GM12878 (cell line): ENCODE measurements at regions of chr5 and their contacts with region 1.

Region 1: DNA sequence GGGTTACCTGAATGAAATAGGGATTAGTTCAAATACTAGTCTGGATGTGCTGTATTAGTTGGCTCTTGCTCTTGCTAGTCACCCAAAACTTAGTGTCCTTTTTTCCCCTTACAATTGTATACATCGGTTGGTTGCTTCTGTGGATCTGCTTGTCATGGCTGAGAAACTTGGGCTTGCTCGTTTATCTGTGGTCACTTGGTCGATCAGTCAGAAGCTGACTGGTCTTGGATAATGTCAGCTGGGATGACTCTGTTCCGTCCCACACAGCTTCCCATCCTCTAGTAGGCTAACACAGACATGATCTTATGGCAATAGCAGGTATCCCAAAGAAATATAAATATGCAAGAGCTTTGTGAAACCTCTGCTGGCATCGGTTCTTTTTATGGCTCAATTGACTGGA is 807.4 kb downstream of the MAT2B start:
- DNase-seq: no peak
- ATAC-seq: no peak
- H3K4me3 ChIP-seq: no peak overlapping the region
- H3K27ac ChIP-seq: no peak overlapping the region
- H3K4me1 ChIP-seq: no peaks in the 10 kb centered on the region
- H3K27me3 ChIP-seq: no peaks in the 10 kb centered on the region
- CTCF ChIP-seq: no peak
- EP300 ChIP-seq: no peak
- POLR2A ChIP-seq: no peak
- RAD21 ChIP-seq: no peak

Region 2: DNA sequence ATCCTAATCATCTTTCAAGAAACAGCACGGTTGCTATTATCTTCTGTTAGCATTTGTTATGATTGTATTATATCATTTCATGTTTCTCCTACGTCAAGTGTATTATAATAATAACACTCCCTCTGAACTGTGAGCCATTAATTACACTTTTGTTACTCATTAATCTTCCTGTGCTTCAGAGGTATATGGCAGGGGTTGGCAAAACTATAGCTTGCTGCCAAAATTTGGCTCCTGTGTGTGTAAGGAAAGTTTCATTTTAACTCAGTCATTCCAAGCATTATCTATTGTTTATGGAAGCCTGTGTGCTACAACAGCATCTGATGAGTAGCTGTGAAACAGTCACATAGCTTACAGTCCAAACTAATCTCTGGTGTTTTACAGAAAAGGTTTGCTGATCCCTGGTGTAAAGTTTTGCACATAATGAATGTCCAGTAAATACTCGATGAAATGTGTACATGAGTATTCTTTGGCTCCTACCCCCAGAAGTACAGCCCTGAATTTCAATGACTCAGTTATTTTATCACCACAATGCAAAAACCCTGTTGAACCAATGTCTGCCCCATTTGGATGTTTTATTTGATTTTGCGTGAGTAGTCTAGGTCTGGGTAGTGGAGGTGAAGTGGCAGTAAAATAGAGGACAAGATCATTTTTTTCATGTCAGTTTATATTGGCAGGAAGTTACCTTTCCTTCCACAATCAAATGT is 159.2 kb before region 1 on chr5:
- CTCF ChIA-PET with region 1: no interaction called
- POLR2A ChIA-PET with region 1: no interaction called
- RAD21 ChIA-PET with region 1: no interaction called
- SMC1A ChIA-PET with region 1: no interaction called
- in situ Hi-C with region 1: no loop called
- intact Hi-C with region 1: no loop called
- DNase-seq: no peak
- ATAC-seq: no peak
- H3K4me3 ChIP-seq: no peak overlapping the region
- H3K27ac ChIP-seq: no peak overlapping the region
- H3K4me1 ChIP-seq: no peaks in the 10 kb centered on the region
- H3K27me3 ChIP-seq: no peaks in the 10 kb centered on the region
- CTCF ChIP-seq: no peak
- EP300 ChIP-seq: no peak
- POLR2A ChIP-seq: no peak
- RAD21 ChIP-seq: no peak

Region 3: DNA sequence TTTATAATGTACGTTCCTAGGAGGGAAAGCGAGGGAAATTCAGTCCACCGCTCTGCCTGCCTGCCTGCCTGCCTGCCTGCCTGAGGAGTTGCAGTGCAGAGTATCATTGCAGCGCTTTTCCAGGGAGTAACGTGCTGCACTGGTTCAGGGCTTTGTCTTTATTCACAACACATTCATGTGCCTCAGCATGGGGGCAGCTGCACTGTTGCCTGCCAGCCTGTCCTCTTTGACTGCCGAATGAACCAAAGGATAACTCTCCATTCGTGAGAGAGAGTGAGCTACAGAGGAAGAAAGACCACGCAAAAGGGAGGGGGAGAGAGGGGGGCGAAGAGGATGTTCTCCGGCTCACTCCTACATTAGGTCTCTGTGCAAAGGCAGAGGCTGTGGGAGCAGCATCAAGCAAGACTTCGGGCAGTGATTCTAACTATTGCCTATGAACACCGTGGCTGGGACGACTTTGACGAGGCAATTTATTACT is 16.2 kb before region 1 on chr5:
- CTCF ChIA-PET with region 1: interaction called, 3 read pairs
- POLR2A ChIA-PET with region 1: no interaction called
- RAD21 ChIA-PET with region 1: interaction called, 12 read pairs
- SMC1A ChIA-PET with region 1: interaction called, 17 read pairs
- in situ Hi-C with region 1: no loop called
- intact Hi-C with region 1: no loop called
- DNase-seq: no peak
- ATAC-seq: peak; percentile 16; the same call in 1 of the 3 replicates
- H3K4me3 ChIP-seq: no peak overlapping the region
- H3K27ac ChIP-seq: no peak overlapping the region
- H3K4me1 ChIP-seq: no peaks in the 10 kb centered on the region
- H3K27me3 ChIP-seq: no peaks in the 10 kb centered on the region
- CTCF ChIP-seq: no peak
- EP300 ChIP-seq: no peak
- POLR2A ChIP-seq: no peak
- RAD21 ChIP-seq: no peak